Aorta (tissue), 5 donors: ENCODE measurements at regions of chr1 and their contacts with region 1.

Region 1: DNA sequence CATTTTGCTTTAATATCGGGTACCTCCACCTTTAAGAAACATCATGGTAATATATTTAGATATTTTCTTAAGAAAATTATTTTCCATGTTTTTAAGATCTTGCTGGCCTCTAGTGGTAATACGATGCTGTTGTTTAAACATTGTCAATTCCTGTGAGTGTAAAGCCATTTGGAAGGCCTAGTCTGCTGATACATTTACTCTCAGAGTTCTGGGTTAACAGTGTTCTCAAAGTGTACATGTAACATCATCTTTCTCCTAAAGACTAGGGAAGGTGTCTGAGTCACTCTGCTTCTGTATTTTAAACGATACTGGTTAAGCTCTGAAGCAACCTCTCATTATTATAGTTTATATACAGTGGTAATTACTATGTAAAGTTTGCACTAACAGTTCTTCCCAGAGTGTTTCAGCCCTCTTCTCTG is 189.1 kb downstream of the RASAL2 start:
- DNase-seq: no peak
- ATAC-seq: no peak
- H3K4me3 ChIP-seq: no peak overlapping the region
- H3K27ac ChIP-seq: no peak overlapping the region
- H3K4me1 ChIP-seq: no peaks in the 10 kb centered on the region
- H3K27me3 ChIP-seq: no peaks in the 10 kb centered on the region

Region 2: DNA sequence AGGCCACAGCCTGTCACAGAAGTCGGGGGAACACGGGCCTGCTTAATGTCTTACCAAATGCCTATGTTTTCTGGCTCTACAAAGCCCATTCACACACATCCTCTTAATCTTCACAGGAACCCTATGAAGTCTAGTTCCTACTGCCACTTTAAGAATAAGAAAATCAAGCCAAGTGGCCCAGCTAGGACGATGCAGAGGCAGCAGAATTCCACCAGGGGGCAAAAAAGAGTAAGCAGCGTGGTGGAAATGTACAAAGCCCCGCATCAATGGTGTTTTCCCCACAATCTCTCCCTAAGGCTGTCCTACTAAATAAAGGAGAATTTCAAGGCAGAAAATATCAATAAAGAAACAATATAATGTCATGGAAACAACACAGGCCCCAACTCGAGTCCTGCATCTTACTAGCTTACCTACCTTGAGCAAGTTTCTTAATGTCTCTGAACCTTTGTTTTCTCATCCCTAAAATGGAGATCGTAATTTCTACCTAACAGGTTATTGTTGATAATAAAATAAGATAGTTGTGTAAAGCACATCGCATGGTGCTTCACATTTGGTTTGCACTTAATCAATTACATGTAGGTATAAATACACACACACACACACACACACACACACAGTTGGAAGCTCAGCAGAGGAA is 334.5 kb before region 1 on chr1:
- intact Hi-C with region 1: loop called in 1 of 2 experiments (anchors 5 kb)
- DNase-seq: no peak
- ATAC-seq: peak; percentile 76
- H3K4me3 ChIP-seq: no peak overlapping the region
- H3K27ac ChIP-seq: no peak overlapping the region
- H3K4me1 ChIP-seq: no peaks in the 10 kb centered on the region
- H3K27me3 ChIP-seq: no peaks in the 10 kb centered on the region

Region 3: DNA sequence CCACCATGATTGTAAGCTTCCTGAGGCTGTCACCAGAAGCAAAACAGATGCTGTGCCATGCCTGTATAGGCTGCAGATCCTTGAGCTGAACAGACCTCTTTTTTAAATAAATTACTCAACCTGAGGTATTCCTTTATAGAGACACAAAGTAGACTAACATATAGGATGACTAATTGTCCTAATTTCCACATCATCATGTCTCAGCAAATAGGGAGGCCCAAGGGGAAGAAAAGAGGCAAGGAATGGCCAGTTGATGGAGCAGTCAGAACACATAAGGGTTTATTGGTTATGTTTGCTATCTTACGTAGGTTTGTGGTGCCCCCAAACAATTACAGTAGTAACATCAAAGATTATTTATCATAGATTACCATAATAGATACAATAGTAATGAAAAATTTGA is 62.9 kb before region 1 on chr1:
- intact Hi-C with region 1: no loop called
- DNase-seq: no peak
- ATAC-seq: no peak
- H3K4me3 ChIP-seq: no peak overlapping the region
- H3K27ac ChIP-seq: no peak overlapping the region
- H3K4me1 ChIP-seq: no peaks in the 10 kb centered on the region
- H3K27me3 ChIP-seq: no peaks in the 10 kb centered on the region